Posterior vena cava (tissue), 2 donors: ENCODE measurements at regions of chr12 and their contacts with region 1.

Region 1: GRCh38 chr12:18320036-18320617 is 58.8 kb downstream of the PIK3C2G start:
- DNase-seq: no peak

Region 2: DNA sequence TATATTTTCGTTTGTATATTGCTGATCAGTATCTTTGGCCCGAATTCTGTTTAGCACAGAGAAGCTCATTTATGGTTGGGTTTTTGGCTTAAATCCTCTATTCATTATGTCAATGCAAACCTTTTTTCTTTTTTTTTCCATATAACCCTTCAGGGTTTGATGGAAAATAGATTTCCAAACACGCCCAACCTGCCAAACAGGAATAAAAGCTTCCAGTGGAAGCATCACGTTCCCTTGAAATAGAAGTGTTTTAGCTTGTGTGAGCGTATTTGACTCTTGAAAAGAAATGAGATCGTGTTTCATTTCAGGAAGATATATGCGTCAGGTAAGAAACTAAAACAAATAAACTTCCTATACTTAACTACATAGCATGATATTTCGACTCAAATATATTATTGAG is 58.9 kb before region 1 on chr12 and contains the start of gene PIK3C2G:
- intact Hi-C with region 1: no loop called
- DNase-seq: no peak
- total RNA-seq, gene PIK3C2G: 0.09 to 0.10 TPM

Region 3: DNA sequence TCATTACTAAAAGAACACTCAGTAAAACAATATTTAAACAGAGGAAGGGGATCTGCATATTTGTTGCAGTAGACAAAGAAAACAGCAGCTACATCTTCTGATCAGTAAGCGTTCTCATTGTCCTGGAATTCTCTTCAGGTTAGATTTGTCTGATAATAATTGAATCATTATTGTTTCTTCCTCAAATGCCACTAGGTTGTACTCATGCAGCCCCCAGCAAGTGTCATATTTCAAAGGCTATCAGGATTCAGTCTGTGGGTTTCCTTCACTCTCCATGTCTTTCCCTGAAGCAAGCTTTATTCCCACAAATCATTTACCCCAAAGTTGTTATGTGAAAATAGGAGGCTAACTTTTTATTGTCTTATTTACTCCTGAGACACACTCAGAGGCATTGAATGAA is 44.1 kb before region 1 on chr12:
- intact Hi-C with region 1: no loop called
- DNase-seq: no peak

Region 4: GRCh38 chr12:18302809-18303430 is 17.2 kb before region 1 on chr12:
- intact Hi-C with region 1: loop called in 1 of 2 experiments (anchors 1 kb)
- DNase-seq: no peak